Activated CD4-positive, alpha-beta memory T cell treated with anti-CD3 and anti-CD28 coated beads for 36 hours (primary cell): ENCODE measurements at regions of chr10 and their contacts with region 1.

Region 1: DNA sequence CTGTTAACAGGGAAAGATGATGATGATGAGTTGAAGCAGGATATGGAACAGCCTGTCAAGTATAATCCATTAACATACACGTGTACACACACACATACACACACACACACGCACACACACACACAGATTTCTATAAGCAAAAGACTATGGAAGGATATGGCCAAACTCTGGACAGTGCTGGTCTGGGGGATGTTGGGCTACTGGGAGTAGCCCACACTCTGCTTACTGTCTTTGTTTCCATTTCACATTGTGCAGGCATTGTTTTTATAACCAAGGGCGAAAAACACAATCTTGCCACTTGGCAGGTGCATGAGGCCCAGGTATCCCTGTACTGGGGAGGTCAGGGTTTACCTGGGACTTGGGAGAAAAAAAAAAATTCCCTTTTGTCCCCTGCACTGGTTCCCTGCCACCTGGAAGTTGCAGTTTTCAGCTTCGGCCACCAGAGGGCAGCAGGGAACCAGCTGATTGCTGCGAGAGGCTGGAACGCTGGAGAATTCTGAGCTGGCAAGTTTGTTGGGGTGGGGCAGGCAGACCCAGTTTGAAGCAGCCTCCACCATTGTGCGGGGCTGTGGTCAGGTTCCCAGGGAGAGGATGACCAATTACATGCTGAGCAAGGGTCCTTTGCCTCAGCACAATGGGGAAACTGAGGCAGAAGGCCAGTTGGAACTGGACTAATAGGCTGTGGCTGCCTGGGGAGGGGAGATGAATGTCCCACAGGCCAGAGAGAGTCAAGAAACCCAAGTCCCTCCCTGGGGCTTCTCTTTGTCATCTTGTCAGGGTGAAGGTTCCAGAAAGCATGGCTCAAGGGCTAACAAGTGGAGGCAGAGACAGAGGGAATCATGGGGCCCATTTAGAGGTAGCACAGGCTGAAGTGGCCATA is 27.3 kb downstream of the PPIF start:
- DNase-seq: peak; percentile 84
- H3K4me3 Mint-ChIP-seq: no peak overlapping the region
- H3K27ac Mint-ChIP-seq: no peak overlapping the region
- H3K4me1 Mint-ChIP-seq: peaks cover 2% of the 10 kb centered on the region
- H3K27me3 Mint-ChIP-seq: no peaks in the 10 kb centered on the region

Region 2: GRCh38 chr10:79400146-79401004 is 25.8 kb after region 1 on chr10:
- CTCF ChIA-PET with region 1: interaction called, 14 read pairs
- POLR2A ChIA-PET with region 1: no interaction called
- intact Hi-C with region 1: loop called (anchors 2 kb)
- DNase-seq: peak; percentile 76
- H3K4me3 Mint-ChIP-seq: no peak overlapping the region
- H3K27ac Mint-ChIP-seq: no peak overlapping the region
- H3K4me1 Mint-ChIP-seq: no peaks in the 10 kb centered on the region
- H3K27me3 Mint-ChIP-seq: peaks cover 1% of the 10 kb centered on the region

Region 3: DNA sequence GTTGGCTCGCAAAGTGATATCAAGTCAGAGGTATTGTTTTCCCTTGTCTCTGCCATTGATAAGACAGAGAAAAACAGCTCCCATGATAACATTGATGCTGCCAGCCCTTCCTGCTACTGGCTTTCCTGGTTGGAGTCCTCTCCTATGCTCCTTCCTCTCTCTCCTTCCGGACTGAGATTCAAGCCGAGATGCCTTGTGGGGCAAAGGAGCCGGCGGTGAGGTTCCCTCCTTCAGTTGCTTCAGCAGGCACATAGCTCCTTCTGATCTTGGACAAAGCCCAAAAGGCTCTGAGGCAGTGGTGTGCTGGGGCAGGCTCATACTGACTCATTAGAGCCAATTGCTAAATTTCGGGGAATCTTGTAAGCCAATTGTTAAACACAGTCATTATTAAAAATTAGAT is 79.7 kb after region 1 on chr10:
- CTCF ChIA-PET with region 1: interaction called, 15 read pairs
- POLR2A ChIA-PET with region 1: no interaction called
- intact Hi-C with region 1: no loop called
- DNase-seq: no peak
- H3K4me3 Mint-ChIP-seq: no peak overlapping the region
- H3K27ac Mint-ChIP-seq: no peak overlapping the region
- H3K4me1 Mint-ChIP-seq: no peaks in the 10 kb centered on the region
- H3K27me3 Mint-ChIP-seq: no peaks in the 10 kb centered on the region

Region 4: DNA sequence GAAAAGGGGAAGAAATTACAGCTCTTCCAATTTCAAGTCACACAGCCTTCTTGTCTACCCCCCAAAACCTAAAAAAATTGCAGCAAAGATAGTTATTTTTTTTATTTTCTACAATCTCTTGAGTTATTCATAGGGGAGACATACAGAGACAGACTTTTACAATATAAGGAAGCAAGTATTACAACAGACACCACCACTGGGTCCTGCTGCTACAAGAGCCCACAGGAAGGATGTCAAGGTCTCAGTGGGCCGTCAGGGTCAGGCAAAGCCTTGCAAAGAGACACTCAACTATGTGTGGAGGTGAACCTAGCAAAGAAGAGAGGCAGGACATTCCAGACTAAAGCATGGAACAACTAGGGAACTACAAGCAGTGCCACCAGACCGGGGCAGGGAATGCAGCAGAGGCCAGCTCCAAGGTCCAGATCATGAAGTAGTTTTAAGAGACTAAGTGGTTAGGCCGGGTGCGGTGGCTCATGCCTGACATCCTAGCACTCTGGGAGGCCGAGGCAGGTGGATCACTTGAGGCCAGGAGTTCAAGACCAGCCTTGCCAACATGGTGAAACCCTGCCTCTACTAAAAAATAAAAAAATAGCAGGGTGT is 99.0 kb after region 1 on chr10:
- CTCF ChIA-PET with region 1: interaction called, 74 read pairs
- POLR2A ChIA-PET with region 1: no interaction called
- intact Hi-C with region 1: no loop called
- DNase-seq: no peak
- H3K4me3 Mint-ChIP-seq: no peak overlapping the region
- H3K27ac Mint-ChIP-seq: no peak overlapping the region
- H3K4me1 Mint-ChIP-seq: no peaks in the 10 kb centered on the region
- H3K27me3 Mint-ChIP-seq: peaks cover 13% of the 10 kb centered on the region

Region 5: GRCh38 chr10:80144067-80144695 is 769.6 kb after region 1 on chr10:
- CTCF ChIA-PET with region 1: interaction called, 10 read pairs
- POLR2A ChIA-PET with region 1: no interaction called
- intact Hi-C with region 1: loop called (anchors 5 kb)
- DNase-seq: peak; percentile 53
- H3K4me3 Mint-ChIP-seq: peak overlapping the region; percentile 62
- H3K27ac Mint-ChIP-seq: peak overlapping the region; percentile 57
- H3K4me1 Mint-ChIP-seq: peaks cover 18% of the 10 kb centered on the region
- H3K27me3 Mint-ChIP-seq: peaks cover 8% of the 10 kb centered on the region